Activated CD4-positive, alpha-beta memory T cell treated with anti-CD3 and anti-CD28 coated beads for 36 hours (primary cell): ENCODE measurements at regions of chr3 and their contacts with region 1.

Region 1: DNA sequence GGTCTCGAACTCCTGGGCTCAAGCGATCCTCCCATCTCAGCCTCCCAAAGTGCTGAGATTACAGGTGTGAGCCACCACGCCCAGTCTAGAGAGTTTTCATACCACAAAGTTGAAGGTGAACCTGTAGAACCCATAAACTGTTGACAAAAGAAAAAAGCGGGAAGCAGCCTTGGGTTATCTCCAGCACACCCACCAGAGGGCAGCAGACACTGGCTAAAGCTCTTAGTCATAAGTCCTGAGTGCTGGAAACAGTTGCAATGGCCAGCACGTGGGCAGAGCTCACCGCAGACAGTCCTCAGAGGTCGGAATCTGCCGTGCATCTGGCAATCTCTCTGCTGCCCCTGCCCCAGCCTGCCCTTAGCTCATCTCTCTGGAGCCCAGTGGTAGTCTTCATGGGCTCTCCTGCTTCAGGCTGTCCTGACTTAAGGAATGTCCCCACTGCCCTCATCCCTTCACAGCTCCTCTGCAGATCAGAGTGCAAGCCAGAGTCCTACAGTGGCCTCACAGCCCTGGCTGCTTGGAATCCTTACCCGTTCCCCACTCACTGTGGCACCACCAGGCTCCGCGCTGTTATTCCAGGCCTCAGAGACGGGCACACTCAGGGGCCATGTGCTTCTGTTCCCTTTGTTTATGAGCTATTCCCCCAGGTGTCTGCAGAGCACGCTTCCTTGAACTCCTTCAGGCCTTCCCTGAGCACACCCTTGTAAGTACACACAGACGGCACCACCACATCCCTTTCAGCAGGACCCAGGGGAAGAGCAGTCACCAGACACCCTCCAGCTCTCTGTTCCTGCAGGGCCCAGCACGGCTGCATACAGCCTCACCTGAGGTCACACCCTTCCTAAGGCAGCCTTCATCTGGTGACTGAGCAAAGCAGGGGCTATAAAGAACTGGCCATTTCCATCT is 8.8 kb upstream of the ELP6 start:
- DNase-seq: peak; percentile 88
- H3K4me3 Mint-ChIP-seq: no peak overlapping the region
- H3K27ac Mint-ChIP-seq: no peak overlapping the region
- H3K4me1 Mint-ChIP-seq: no peaks in the 10 kb centered on the region
- H3K27me3 Mint-ChIP-seq: no peaks in the 10 kb centered on the region

Region 2: GRCh38 chr3:46948830-46949671 is 573.3 kb before region 1 on chr3:
- CTCF ChIA-PET with region 1: no interaction called
- POLR2A ChIA-PET with region 1: no interaction called
- intact Hi-C with region 1: no loop called
- DNase-seq: peak; percentile 44
- H3K4me3 Mint-ChIP-seq: peak overlapping the region; percentile 28
- H3K27ac Mint-ChIP-seq: peak overlapping the region; percentile 95
- H3K4me1 Mint-ChIP-seq: peaks cover 83% of the 10 kb centered on the region
- H3K27me3 Mint-ChIP-seq: no peaks in the 10 kb centered on the region

Region 3: DNA sequence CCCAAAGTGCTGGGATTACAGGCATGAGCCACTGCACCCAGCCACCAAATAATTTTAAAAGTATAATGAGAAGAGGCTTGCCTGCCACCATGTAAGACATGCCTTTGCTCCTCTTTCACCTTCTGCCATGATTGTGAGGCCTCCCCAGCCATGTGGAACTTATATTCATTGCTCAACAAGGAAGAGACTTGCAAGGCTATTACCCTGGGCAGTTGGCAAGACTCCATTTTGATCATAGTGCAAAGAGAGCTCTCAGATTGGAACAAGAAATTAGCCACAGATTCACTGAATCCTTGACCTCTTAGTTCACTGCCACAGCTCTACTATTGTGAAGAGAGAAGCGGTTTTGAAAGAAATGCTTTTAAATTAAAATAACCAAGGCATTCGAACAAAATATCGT is 52.7 kb before region 1 on chr3:
- CTCF ChIA-PET with region 1: no interaction called
- POLR2A ChIA-PET with region 1: no interaction called
- intact Hi-C with region 1: no loop called
- DNase-seq: no peak
- H3K4me3 Mint-ChIP-seq: no peak overlapping the region
- H3K27ac Mint-ChIP-seq: no peak overlapping the region
- H3K4me1 Mint-ChIP-seq: peaks cover 40% of the 10 kb centered on the region
- H3K27me3 Mint-ChIP-seq: no peaks in the 10 kb centered on the region

Region 4: GRCh38 chr3:47533481-47533880 is 11.1 kb after region 1 on chr3:
- CTCF ChIA-PET with region 1: interaction called, 11 read pairs
- POLR2A ChIA-PET with region 1: no interaction called
- intact Hi-C with region 1: no loop called
- DNase-seq: no peak
- H3K4me3 Mint-ChIP-seq: no peak overlapping the region
- H3K27ac Mint-ChIP-seq: no peak overlapping the region
- H3K4me1 Mint-ChIP-seq: no peaks in the 10 kb centered on the region
- H3K27me3 Mint-ChIP-seq: peaks cover 11% of the 10 kb centered on the region

Region 5: DNA sequence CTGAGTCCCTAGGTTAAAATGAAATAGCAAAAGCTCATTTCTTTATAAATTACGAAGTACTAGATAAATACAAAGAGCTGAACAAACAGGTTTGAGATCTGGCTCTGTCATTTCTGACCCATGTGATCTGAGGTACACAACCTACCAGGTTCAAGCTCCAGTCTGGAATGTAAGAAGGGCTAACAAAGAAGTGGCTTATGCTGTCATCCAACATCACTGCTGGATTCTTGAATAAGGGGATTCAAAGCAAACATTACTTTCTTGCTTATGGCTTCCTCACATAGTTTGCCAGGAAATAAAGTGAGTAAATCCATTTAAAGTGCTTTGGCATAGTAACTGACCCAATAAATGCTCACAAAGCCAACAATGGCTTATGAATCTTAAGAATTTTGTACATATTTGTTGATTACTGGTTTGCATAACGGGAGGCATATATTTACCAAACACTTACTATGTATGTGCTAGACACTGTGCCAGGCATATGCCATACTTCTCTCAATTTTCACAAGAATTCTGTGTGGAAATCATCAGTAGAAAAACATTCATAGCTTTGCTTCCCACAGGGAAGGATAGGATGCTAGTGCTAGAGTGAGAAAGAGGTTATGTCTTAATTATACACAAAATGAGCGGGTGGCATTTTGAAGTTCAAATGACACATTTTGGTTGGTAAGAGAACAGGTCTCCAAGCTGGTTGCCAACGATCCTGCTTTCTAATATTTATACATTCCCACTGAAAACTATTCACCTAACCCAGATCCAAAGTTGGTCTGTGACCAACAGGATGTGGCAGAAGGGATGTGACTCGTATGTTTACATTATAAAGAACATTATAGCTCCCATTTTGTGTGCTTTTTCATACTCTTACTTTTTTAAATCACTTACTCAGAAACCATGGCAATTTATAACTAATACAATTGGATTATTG is 95.0 kb after region 1 on chr3:
- CTCF ChIA-PET with region 1: interaction called, 16 read pairs
- POLR2A ChIA-PET with region 1: no interaction called
- intact Hi-C with region 1: no loop called
- DNase-seq: no peak
- H3K4me3 Mint-ChIP-seq: no peak overlapping the region
- H3K27ac Mint-ChIP-seq: no peak overlapping the region
- H3K4me1 Mint-ChIP-seq: no peaks in the 10 kb centered on the region
- H3K27me3 Mint-ChIP-seq: no peaks in the 10 kb centered on the region

Region 6: DNA sequence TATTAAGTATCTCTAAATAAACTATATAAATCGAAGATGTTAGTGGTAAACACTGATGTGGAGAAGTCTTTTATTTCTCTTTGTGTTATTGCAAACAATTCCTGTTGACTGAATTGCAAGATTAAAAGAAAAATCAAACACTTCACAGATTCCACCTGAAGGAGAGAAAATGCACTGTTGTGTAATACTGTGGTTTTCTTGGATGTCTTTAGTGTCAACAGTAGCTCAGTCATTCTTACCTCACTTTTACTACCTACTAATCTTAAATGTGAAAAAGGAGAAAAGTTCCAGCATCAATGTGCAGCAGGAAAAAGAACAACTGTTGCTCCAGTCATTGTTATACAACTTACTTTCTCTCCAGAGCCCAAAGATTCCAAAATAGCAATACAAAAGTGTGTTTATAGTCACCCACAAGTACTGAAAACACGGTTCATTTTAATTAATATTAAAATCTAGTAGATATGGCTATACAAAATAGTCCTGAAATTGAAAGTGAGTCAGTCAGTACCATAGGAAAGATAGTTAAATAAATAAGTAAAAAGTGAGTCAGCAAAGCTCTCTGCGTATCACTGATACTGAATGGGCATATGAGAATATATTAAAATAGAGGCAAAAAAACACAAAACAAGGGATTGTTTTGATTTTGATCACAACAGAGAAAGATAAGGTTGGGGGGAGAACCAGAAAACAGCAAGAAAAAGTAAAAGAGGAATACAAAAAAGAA is 146.9 kb after region 1 on chr3:
- CTCF ChIA-PET with region 1: interaction called, 10 read pairs
- POLR2A ChIA-PET with region 1: no interaction called
- intact Hi-C with region 1: no loop called
- DNase-seq: no peak
- H3K4me3 Mint-ChIP-seq: no peak overlapping the region
- H3K27ac Mint-ChIP-seq: peak overlapping the region; percentile 9
- H3K4me1 Mint-ChIP-seq: peaks cover 5% of the 10 kb centered on the region
- H3K27me3 Mint-ChIP-seq: no peaks in the 10 kb centered on the region

Region 7: GRCh38 chr3:47791193-47791855 is 269.0 kb after region 1 on chr3:
- CTCF ChIA-PET with region 1: interaction called, 38 read pairs
- POLR2A ChIA-PET with region 1: interaction called, 6 read pairs
- intact Hi-C with region 1: loop called (anchors 1 kb)
- DNase-seq: no peak
- H3K4me3 Mint-ChIP-seq: no peak overlapping the region
- H3K27ac Mint-ChIP-seq: no peak overlapping the region
- H3K4me1 Mint-ChIP-seq: no peaks in the 10 kb centered on the region
- H3K27me3 Mint-ChIP-seq: no peaks in the 10 kb centered on the region

Region 8: DNA sequence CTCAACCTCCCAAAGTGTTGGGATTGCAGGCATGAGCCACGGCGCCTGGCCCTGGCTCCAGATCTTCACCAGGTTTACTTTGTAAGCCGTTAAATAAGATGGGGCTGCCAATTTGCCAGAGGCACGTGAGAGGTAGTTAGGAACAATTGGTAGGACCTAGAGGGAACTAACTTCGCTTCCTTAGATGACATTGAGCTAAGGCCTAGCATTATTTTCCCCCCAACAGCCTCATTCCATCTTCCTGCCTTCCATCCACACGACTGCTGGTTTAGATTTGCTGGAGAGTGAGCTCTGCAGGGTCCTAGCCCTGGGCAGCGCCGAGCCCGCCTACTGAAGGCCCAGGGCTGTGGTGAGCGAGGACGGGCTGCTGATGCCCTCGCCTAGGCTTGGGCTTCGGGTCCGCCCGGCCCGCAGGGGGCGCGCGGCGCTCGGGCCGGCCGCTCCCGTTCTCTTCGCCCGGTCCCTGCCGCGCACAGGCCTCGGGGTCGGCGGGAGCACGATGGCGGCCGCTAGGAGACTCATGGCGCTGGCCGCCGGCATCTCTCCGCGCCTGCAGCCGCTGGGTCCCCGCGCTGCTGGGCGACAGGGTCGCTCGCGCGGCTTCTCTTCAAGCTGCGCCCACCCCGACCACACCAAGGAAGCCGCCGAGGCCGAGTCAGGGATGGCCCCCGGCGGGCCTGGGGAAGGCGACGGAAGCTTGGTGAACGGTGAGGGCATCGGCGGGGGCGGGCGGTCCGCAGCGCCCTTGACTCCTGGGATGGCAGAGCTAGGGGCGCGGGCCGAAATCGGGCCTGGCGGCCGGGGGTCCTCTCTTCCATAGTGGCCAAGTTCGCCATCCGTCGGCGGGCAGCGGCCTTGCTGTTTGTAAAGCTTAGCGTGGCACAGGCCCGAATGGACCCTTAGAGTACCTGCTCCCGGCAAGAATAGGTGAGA is 302.5 kb after region 1 on chr3:
- CTCF ChIA-PET with region 1: interaction called, 13 read pairs
- POLR2A ChIA-PET with region 1: interaction called, 3 read pairs
- intact Hi-C with region 1: no loop called
- DNase-seq: peak; percentile 85
- H3K4me3 Mint-ChIP-seq: peak overlapping the region; percentile 87
- H3K27ac Mint-ChIP-seq: peak overlapping the region; percentile 84
- H3K4me1 Mint-ChIP-seq: peaks cover 30% of the 10 kb centered on the region
- H3K27me3 Mint-ChIP-seq: no peaks in the 10 kb centered on the region

Region 9: DNA sequence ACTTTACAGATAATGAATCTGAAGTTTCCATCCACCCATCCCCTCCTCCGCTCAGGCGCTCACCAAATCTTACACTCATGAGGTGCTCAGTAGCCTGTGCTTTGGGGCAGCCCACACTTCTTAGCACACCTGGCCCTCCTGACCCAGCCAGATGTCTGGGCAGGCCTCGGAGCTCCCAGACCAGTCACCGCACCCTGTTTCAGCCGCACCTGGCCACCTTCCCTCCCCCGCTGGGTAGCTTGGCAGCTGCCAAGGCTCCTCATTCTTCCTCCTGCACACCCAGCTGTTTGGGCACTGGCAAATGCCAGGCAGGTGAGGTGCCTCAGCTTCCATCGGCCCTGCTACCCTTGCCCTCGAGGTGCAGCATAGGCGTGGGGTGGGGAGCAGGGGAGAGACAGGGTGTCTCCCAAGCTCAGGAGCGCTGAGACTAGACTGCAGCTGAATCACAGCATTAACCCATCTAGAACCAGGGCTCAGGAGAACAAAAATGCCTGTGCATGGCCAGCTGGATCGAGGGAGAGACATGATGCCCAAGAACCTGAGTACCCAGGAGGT is 620.1 kb after region 1 on chr3:
- CTCF ChIA-PET with region 1: no interaction called
- POLR2A ChIA-PET with region 1: no interaction called
- intact Hi-C with region 1: no loop called
- DNase-seq: no peak
- H3K4me3 Mint-ChIP-seq: no peak overlapping the region
- H3K27ac Mint-ChIP-seq: no peak overlapping the region
- H3K4me1 Mint-ChIP-seq: no peaks in the 10 kb centered on the region
- H3K27me3 Mint-ChIP-seq: no peaks in the 10 kb centered on the region